ENCODE measurements at regions of chr1 and their contacts with region 1.

Region 1: DNA sequence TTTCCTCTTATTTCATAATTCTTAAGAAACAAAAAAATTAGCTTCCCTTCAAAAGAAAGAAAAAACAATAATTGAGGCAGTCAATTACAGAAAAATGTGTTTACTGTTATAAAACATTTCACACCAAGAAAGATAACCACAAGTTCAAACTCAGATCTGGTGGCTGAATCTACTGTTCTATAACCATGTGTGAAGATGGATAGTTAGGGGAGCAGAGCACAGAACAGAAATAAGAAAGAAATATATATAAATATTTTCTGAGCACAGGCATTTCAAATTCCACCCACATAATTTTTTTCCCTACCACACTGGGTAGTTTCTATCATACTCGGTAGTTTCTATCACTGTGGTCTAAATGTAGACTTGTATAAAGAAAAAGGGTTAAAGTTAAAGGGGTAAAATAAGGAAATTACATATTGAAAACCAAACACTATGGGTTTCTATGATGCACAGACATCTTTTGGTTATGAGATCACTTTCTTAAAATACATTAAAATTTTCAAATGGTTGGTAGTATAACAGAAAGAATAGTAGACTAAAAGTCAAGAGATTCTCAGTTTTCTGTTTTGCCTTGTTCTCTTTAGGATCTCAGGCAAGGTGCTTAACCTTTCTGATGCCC is 10.8 kb downstream of the LYST start:
- DNase-seq: no peak
- ATAC-seq: no peak
- H3K4me3 ChIP-seq: no peak overlapping the region
- H3K27ac ChIP-seq: no peak overlapping the region
- H3K4me1 ChIP-seq: peaks cover 47% of the 10 kb centered on the region
- H3K27me3 ChIP-seq: no peaks in the 10 kb centered on the region
- CTCF ChIP-seq: no peak

Region 2: GRCh38 chr1:235945775-235946570 is 90.1 kb after region 1 on chr1:
- CTCF ChIA-PET with region 1: no interaction called
- POLR2A ChIA-PET with region 1: interaction called, 15 read pairs
- in situ Hi-C with region 1: no loop called
- intact Hi-C with region 1: no loop called
- DNase-seq: no peak
- ATAC-seq: peak; percentile 26
- H3K4me3 ChIP-seq: no peak overlapping the region
- H3K27ac ChIP-seq: peak overlapping the region; percentile 13
- H3K4me1 ChIP-seq: peaks cover 14% of the 10 kb centered on the region
- H3K27me3 ChIP-seq: no peaks in the 10 kb centered on the region
- CTCF ChIP-seq: no peak

Region 3: GRCh38 chr1:236000781-236001180 is 144.9 kb after region 1 on chr1:
- CTCF ChIA-PET with region 1: interaction called, 11 read pairs
- POLR2A ChIA-PET with region 1: no interaction called
- in situ Hi-C with region 1: no loop called
- intact Hi-C with region 1: no loop called
- DNase-seq: no peak
- ATAC-seq: no peak
- H3K4me3 ChIP-seq: no peak overlapping the region
- H3K27ac ChIP-seq: no peak overlapping the region
- H3K4me1 ChIP-seq: 0 out of 2 replicates have a peak, but pooled peaks cover 2% of the 10 kb centered on the region
- H3K27me3 ChIP-seq: no peaks in the 10 kb centered on the region
- CTCF ChIP-seq: no peak

Measured in Panc1 (cell line).